Ascending aorta (tissue), 2 donors: ENCODE measurements at regions of chr15 and their contacts with region 1.

Region 1: GRCh38 chr15:34367101-34368081 is at the start of gene LPCAT4:
- DNase-seq: peak; percentile 52 to 94
- H3K4me3 ChIP-seq: peak within 1 kb of the TSS; percentile 87 to 90
- H3K27ac ChIP-seq: peak within 1 kb of the TSS; percentile 91 to 95
- H3K4me1 ChIP-seq: peaks cover 6 to 11% of the 10 kb centered on the region in 2 donors
- H3K27me3 ChIP-seq: no peaks in the 10 kb centered on the region
- CTCF ChIP-seq: peak; percentile 96 to 97 (median 97)
- total RNA-seq, gene LPCAT4: 113 TPM

Region 2: DNA sequence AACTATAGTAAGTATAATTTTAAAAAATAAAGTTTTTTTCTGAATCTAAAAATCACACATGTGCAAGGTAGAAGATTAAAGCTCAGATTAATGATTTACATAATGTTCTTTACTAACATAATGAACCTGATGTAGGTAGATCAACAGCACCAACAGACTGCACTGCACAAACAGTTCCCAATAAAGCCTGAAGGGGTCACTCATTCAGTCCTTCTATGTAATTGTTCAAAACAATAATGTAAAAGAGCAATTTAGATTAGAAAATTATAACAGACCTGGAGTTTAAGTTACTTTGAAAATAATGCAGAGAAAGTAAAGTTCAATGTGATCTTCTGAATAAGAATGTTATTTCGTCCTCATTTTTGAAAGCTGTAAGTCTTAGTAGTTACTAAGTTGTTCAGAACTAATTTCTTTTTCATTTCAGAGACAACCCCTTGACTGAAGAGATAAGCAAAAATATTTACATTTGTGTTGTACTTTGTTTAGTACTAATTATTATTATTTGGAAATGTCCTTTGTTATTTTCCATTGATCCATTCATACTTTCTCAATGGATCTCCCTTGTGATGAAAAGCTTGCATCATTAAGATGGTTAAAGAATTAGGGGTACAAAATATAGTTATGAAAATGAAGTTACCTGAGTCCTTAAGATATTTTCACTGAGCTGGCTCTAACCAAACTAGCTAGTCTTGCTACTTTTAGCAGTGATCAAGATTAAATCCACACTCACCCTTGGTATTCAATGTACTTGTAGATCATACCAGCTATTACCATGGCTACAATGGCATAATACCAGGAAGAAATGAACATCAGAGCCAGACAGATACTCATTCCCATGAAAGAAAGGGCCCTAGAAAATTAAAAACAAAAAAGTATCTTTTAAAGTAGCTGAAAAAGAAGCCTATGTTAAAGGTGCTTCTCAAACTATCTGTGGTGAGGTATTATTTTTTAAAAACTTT is 125.7 kb before region 1 on chr15:
- intact Hi-C with region 1: loop called (anchors 1 kb)
- DNase-seq: no peak
- H3K4me3 ChIP-seq: no peak overlapping the region
- H3K27ac ChIP-seq: no peak overlapping the region
- H3K4me1 ChIP-seq: no peaks in the 10 kb centered on the region
- H3K27me3 ChIP-seq: no peaks in the 10 kb centered on the region
- CTCF ChIP-seq: peak; percentile 55 to 75 (median 74)

Region 3: DNA sequence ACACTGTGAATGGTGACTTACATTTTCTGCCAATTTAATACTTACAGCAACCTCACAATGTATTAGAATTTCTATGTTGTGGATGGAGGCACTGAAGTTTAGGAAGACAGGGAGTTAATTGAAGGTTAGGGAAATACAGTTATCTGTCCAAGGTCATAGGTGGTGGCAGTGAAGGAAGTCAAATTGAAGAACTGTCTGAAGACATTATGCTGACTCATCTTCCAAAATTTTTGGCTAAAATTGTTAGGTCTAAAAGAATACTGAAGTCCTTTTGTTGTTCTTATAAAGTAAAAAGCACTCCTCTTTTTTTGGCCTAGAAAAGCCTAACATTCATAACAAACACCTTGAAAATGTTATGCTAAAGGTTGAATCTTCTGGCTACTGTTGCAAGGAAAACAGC is 114.8 kb before region 1 on chr15:
- intact Hi-C with region 1: no loop called
- DNase-seq: no peak
- H3K4me3 ChIP-seq: no peak overlapping the region
- H3K27ac ChIP-seq: no peak overlapping the region
- H3K4me1 ChIP-seq: no peaks in the 10 kb centered on the region
- H3K27me3 ChIP-seq: no peaks in the 10 kb centered on the region
- CTCF ChIP-seq: no peak

Region 4: DNA sequence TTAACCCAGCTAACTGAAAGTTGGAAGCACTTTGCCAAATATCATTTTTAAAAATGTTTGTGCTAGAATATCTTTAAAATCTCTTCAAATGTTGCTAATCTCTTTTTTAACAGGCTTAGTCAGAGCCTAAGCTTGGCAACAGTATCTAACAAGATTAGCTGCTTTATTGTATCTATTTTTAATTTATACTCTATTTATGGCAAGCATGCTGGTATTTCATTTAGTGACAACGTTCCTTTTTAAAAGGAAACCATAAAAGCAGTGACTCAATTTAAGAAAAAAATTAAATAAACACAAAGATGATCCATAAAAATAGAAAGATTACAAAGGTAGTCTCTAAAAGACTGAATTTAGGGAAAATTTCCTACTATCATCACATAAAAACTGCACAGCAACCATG is 70.3 kb before region 1 on chr15:
- intact Hi-C with region 1: loop called (anchors 2 kb)
- DNase-seq: no peak
- H3K4me3 ChIP-seq: peak overlapping the region; percentile 7 to 50
- H3K27ac ChIP-seq: peak overlapping the region; percentile 83 to 92
- H3K4me1 ChIP-seq: peaks cover 4 to 32% of the 10 kb centered on the region in 2 donors
- H3K27me3 ChIP-seq: no peaks in the 10 kb centered on the region
- CTCF ChIP-seq: no peak

Region 5: GRCh38 chr15:34331809-34332208 is 35.6 kb before region 1 on chr15:
- intact Hi-C with region 1: no loop called
- DNase-seq: no peak
- H3K4me3 ChIP-seq: no peak overlapping the region
- H3K27ac ChIP-seq: no peak overlapping the region
- H3K4me1 ChIP-seq: peaks cover 0 to 14% of the 10 kb centered on the region in 2 donors
- H3K27me3 ChIP-seq: no peaks in the 10 kb centered on the region
- CTCF ChIP-seq: no peak

Region 6: GRCh38 chr15:34342737-34343575 is 24.4 kb before region 1 on chr15 and contains the starts of genes NOP10 and NUTM1:
- intact Hi-C with region 1: loop called (anchors 1 kb)
- DNase-seq: peak; percentile 63 to 95
- H3K4me3 ChIP-seq: peak within 1 kb of the TSS; percentile 67 to 77
- H3K27ac ChIP-seq: peak within 1 kb of the TSS; percentile 71 to 87
- H3K4me1 ChIP-seq: peaks cover 7 to 13% of the 10 kb centered on the region in 2 donors
- H3K27me3 ChIP-seq: no peaks in the 10 kb centered on the region
- CTCF ChIP-seq: peak; percentile 93 to 96 (median 95)
- total RNA-seq, gene NOP10: 212 TPM
- total RNA-seq, gene NUTM1: not detected

Region 7: GRCh38 chr15:34442891-34443290 is 75.5 kb after region 1 on chr15:
- intact Hi-C with region 1: no loop called
- DNase-seq: no peak
- H3K4me3 ChIP-seq: no peak overlapping the region
- H3K27ac ChIP-seq: no peak overlapping the region
- H3K4me1 ChIP-seq: no peaks in the 10 kb centered on the region
- H3K27me3 ChIP-seq: no peaks in the 10 kb centered on the region
- CTCF ChIP-seq: no peak